ENCODE measurements at regions of chr16 and their contacts with region 1.

Region 1: GRCh38 chr16:2160915-2161551 is 5.5 kb downstream of the TRAF7 start:
- DNase-seq: no peak
- H3K4me3 ChIP-seq: no peak overlapping the region
- H3K27ac ChIP-seq: peak overlapping the region; percentile 35
- H3K4me1 ChIP-seq: peaks cover 76% of the 10 kb centered on the region
- H3K27me3 ChIP-seq: no peaks in the 10 kb centered on the region
- CTCF ChIP-seq: no peak

Region 2: DNA sequence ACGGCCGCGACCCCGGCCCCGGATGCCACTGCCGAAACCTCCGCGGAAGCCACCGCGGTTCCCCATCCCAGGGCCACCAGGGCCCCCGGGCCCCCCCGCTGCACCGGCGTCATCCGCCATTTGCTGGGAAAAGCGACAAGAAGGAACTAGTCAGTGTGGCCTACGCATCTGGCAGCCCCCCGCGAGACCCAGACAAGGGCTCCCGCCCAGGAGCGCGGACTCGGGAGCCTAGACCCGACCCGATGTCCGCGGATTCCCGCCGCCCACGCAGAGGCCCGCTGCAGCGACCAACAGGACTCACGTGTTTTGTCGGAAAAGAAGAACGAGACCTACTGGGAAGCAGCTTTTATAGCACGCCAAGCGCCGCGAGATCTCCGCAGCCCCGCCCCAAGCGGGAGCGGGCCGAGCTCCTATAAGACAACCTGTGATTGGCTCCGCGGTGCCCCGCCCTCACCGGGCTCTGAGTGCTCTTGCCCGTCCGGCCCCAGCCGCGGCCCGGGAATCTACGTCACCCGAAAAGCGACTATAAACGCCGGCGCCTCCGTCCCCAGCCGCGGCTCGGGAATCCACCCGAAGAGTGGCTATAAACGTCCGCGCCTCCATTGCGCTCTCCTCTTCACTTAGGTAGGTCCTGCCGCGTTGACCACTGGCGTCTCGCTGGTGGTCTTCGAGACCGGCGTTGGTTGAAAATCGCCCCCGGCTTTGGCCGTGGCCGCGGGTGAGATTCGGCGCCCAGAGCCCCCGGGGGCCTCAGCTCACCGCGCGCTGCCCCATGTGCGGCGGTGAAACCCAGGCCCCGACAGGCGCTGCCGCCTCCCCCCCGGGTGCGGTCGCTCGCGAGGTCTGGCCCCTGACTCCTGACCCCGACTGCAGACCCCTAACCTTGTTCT is 196.3 kb before region 1 on chr16 and contains the start of gene RPS2:
- CTCF ChIA-PET with region 1: no interaction called
- dilution Hi-C with region 1: loop called (anchors 10 kb)
- in situ Hi-C with region 1: no loop called
- intact Hi-C with region 1: no loop called
- DNase-seq: peak; percentile 96
- H3K4me3 ChIP-seq: peak within 1 kb of the TSS; percentile 59 to 98 (median 94)
- H3K27ac ChIP-seq: peak within 1 kb of the TSS; percentile 87
- H3K4me1 ChIP-seq: peaks cover 16% of the 10 kb centered on the region
- H3K27me3 ChIP-seq: no peaks in the 10 kb centered on the region
- CTCF ChIP-seq: no peak
- total RNA-seq, gene RPS2: 1,442 to 3,060 TPM

Region 3: GRCh38 chr16:2095315-2095853 is 65.6 kb before region 1 on chr16:
- CTCF ChIA-PET with region 1: no interaction called
- dilution Hi-C with region 1: no loop called
- in situ Hi-C with region 1: no loop called
- intact Hi-C with region 1: no loop called
- DNase-seq: peak; percentile 17
- H3K4me3 ChIP-seq: no peak overlapping the region
- H3K27ac ChIP-seq: no peak overlapping the region
- H3K4me1 ChIP-seq: no peaks in the 10 kb centered on the region
- H3K27me3 ChIP-seq: no peaks in the 10 kb centered on the region
- CTCF ChIP-seq: no peak

Region 4: DNA sequence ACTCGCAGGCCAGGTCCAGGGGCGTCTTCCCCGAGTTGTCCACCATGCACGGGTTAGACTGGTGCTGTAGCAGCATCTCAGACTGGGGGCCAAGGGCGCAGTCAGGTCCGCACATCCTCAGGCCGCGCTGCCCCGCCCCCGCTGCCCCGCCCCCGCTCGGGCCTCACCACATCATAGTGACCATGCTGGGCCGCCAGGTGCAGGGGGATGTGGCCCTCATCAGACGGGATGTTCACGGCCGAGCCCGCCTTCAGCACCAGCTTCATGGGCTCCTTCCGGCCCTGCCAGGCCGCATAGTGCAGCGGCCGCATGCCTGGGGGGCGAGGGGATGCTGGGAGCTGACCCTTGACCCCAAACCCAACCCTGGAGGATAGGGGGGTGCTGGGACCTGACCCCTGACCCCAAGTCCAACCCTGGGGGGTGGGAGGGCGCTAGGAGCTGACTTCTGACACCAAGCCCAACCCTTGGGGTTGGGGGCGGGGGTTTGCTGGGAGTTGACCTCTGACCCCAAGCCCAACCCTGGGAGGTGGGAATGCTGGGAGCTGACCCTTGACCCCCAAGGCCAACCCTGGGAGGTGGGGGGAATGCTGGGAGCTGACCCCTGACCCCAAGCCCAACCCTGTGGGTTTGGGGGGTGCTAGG is 28.3 kb after region 1 on chr16:
- CTCF ChIA-PET with region 1: interaction called, 22 read pairs
- dilution Hi-C with region 1: no loop called
- in situ Hi-C with region 1: no loop called
- intact Hi-C with region 1: no loop called
- DNase-seq: no peak
- H3K4me3 ChIP-seq: no peak overlapping the region
- H3K27ac ChIP-seq: no peak overlapping the region
- H3K4me1 ChIP-seq: peaks cover 6% of the 10 kb centered on the region
- H3K27me3 ChIP-seq: no peaks in the 10 kb centered on the region
- CTCF ChIP-seq: no peak

Region 5: GRCh38 chr16:2278272-2278608 is 117.2 kb after region 1 on chr16:
- CTCF ChIA-PET with region 1: no interaction called
- dilution Hi-C with region 1: loop called (anchors 10 kb)
- in situ Hi-C with region 1: no loop called
- intact Hi-C with region 1: no loop called
- DNase-seq: no peak
- H3K4me3 ChIP-seq: no peak overlapping the region
- H3K27ac ChIP-seq: no peak overlapping the region
- H3K4me1 ChIP-seq: no peaks in the 10 kb centered on the region
- H3K27me3 ChIP-seq: peaks cover 3% of the 10 kb centered on the region
- CTCF ChIP-seq: no peak

Region 6: GRCh38 chr16:2867987-2868789 is 707.2 kb after region 1 on chr16:
- CTCF ChIA-PET with region 1: no interaction called
- dilution Hi-C with region 1: loop called (anchors 10 kb)
- in situ Hi-C with region 1: no loop called
- intact Hi-C with region 1: no loop called
- DNase-seq: peak; percentile 90
- H3K4me3 ChIP-seq: peak overlapping the region; percentile 55 to 65 (median 62)
- H3K27ac ChIP-seq: peak overlapping the region; percentile 70
- H3K4me1 ChIP-seq: peaks cover 7% of the 10 kb centered on the region
- H3K27me3 ChIP-seq: no peaks in the 10 kb centered on the region
- CTCF ChIP-seq: peak; percentile 90 to 97

Measured in mammary epithelial cell (primary cell).